ENCODE measurements at regions of chr11 and their contacts with region 1.

Region 1: GRCh38 chr11:102495161-102496042 is 35.1 kb downstream of the MMP7 start:
- H3K4me3 Mint-ChIP-seq: no peak overlapping the region
- H3K27ac Mint-ChIP-seq: no peak overlapping the region
- H3K4me1 Mint-ChIP-seq: no peaks in the 10 kb centered on the region
- H3K27me3 Mint-ChIP-seq: peaks cover 3% of the 10 kb centered on the region

Region 2: GRCh38 chr11:102287964-102288724 is 207.3 kb before region 1 on chr11:
- intact Hi-C with region 1: loop called (anchors 5 kb)
- H3K4me3 Mint-ChIP-seq: no peak overlapping the region
- H3K27ac Mint-ChIP-seq: no peak overlapping the region
- H3K4me1 Mint-ChIP-seq: peaks cover 46% of the 10 kb centered on the region
- H3K27me3 Mint-ChIP-seq: no peaks in the 10 kb centered on the region

Region 3: DNA sequence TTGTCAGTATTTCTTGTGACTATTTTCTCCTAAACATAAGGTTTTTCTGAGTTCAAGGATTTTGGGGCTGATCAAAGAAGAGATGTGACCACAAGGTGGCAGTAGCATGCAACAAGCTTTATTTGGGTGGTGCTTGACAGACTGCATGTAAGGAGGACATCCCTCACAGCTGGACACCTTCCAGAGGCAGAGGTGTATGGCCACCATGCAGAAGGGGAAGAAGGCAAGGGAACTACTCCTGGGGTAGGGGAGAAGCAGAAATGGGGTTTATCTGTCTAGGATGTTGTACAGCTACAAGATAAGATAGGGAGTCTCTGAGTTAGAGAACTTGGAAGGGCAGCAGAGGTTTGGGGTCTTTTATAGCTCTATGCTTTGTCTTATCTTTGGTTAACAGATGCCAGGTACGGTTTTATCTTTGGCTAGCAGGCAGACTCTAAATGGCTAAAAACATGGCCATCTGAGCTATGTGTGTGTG is 153.5 kb before region 1 on chr11:
- intact Hi-C with region 1: loop called (anchors 2 kb)
- H3K4me3 Mint-ChIP-seq: no peak overlapping the region
- H3K27ac Mint-ChIP-seq: no peak overlapping the region
- H3K4me1 Mint-ChIP-seq: peaks cover 16% of the 10 kb centered on the region
- H3K27me3 Mint-ChIP-seq: no peaks in the 10 kb centered on the region

Region 4: DNA sequence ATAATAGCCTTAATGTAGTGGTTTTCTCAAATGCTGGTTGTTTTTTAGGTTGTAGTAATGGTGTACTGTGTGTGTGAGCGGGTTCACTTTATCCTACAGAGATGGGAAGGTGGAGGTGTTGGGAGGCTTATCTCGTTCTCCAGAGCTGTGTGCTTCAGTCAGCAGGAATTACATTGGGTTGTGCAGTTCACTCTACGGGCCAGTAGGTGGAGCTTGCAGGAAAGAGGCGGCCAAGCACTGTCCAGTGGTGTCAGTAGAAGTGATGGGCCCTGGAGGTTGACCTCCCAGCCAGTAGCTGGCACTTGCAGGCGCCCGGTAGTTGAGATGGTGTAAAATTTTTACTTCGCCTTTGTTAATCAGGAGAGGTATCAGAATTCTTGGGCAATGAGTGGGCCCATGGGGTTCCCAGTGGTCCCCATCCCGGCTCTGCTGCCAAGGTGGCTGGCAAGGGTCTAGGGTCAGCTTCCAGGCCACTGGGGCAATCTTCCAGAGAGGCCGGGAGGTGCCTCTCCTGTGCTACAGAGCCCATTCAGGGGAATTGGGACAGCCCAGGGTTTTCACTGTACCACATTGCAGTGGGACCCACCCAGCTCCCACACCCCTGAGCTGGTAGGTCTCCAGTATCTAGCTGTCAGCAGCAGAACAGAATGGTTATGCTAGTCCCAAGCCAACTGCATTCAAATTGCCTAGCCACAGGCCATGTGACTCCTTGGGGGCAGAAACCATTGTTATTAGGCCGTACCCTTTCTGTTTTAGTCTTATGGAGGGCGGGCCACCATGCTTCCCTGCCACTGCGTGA is 104.5 kb before region 1 on chr11:
- intact Hi-C with region 1: loop called (anchors 1 kb)
- H3K4me3 Mint-ChIP-seq: no peak overlapping the region
- H3K27ac Mint-ChIP-seq: peak overlapping the region; percentile 9
- H3K4me1 Mint-ChIP-seq: peaks cover 28% of the 10 kb centered on the region
- H3K27me3 Mint-ChIP-seq: no peaks in the 10 kb centered on the region

Region 5: GRCh38 chr11:102577182-102577581 is 81.8 kb after region 1 on chr11:
- intact Hi-C with region 1: no loop called
- H3K4me3 Mint-ChIP-seq: no peak overlapping the region
- H3K27ac Mint-ChIP-seq: no peak overlapping the region
- H3K4me1 Mint-ChIP-seq: peaks cover 17% of the 10 kb centered on the region
- H3K27me3 Mint-ChIP-seq: no peaks in the 10 kb centered on the region

Region 6: GRCh38 chr11:102666331-102666957 is 171.0 kb after region 1 on chr11:
- intact Hi-C with region 1: loop called (anchors 10 kb)
- H3K4me3 Mint-ChIP-seq: no peak overlapping the region
- H3K27ac Mint-ChIP-seq: no peak overlapping the region
- H3K4me1 Mint-ChIP-seq: peaks cover 5% of the 10 kb centered on the region
- H3K27me3 Mint-ChIP-seq: peaks cover 7% of the 10 kb centered on the region